Heart right ventricle (tissue), 16 donors: ENCODE measurements at regions of chr17 and their contacts with region 1.

Region 1: GRCh38 chr17:32960506-32961214 is 31.0 kb upstream of the SPACA3 start:
- DNase-seq: no peak
- ATAC-seq: no peak
- H3K4me3 ChIP-seq: no peak overlapping the region
- H3K27ac ChIP-seq: no peak overlapping the region
- H3K4me1 ChIP-seq: no peaks in the 10 kb centered on the region
- H3K27me3 ChIP-seq: peaks cover 0 to 35% (median 13%) of the 10 kb centered on the region in 7 donors
- CTCF ChIP-seq: no peak

Region 2: DNA sequence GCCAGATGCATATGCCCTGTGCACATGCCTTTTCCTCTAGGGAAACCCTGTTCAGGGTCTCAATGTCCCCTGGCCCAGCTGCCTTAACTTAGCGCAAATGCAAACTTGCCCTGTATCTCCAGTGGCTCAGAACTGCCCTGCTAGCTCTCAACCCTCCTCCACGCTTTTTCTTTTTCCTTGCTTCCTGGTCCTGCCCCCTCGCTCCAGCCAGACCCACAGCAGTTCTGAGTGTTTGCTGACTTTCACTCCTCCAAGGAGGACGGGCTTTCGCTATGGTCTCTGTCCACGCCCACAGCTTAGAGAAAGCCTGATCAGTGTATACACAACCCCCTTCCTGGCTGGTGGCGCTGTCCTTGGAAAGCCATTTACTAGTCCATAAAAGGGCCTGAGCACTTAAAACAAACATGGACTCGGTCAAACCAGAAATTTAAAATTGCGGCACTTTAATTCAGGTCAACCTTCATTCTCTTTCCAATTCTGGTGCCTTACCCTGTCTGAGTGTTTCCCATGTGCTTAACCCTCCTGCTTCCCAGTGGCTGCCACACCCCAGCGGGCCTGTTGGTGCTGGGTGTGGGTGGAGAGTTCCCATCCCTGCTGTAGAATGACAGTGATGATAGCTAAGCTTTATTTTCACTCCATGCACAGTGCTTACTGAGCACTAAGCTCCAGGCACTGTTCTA is 48.3 kb before region 1 on chr17:
- intact Hi-C with region 1: no loop called
- DNase-seq: peak; percentile 29 to 51
- ATAC-seq: peak; percentile 77 to 92 (median 83)
- H3K4me3 ChIP-seq: peak overlapping the region in 1 of 10 donors; percentile 24
- H3K27ac ChIP-seq: no peak overlapping the region
- H3K4me1 ChIP-seq: peaks cover 0 to 5% (median 0%) of the 10 kb centered on the region in 9 donors
- H3K27me3 ChIP-seq: peaks cover 0 to 5% (median 0%) of the 10 kb centered on the region in 7 donors
- CTCF ChIP-seq: peak in 1 of 9 donors; percentile 9

Region 3: GRCh38 chr17:32971171-32971570 is 10.5 kb after region 1 on chr17:
- intact Hi-C with region 1: loop called in 1 of 10 experiments (anchors 1 kb)
- DNase-seq: no peak
- ATAC-seq: no peak
- H3K4me3 ChIP-seq: no peak overlapping the region
- H3K27ac ChIP-seq: no peak overlapping the region
- H3K4me1 ChIP-seq: no peaks in the 10 kb centered on the region
- H3K27me3 ChIP-seq: no peaks in the 10 kb centered on the region
- CTCF ChIP-seq: no peak

Region 4: GRCh38 chr17:33021731-33022408 is 61.2 kb after region 1 on chr17:
- intact Hi-C with region 1: no loop called
- DNase-seq: no peak
- ATAC-seq: no peak
- H3K4me3 ChIP-seq: no peak overlapping the region
- H3K27ac ChIP-seq: no peak overlapping the region
- H3K4me1 ChIP-seq: no peaks in the 10 kb centered on the region
- H3K27me3 ChIP-seq: peaks cover 0 to 27% (median 10%) of the 10 kb centered on the region in 7 donors
- CTCF ChIP-seq: no peak